Lower leg skin (tissue), 4 donors: ENCODE measurements at regions of chr17 and their contacts with region 1.

Region 1: DNA sequence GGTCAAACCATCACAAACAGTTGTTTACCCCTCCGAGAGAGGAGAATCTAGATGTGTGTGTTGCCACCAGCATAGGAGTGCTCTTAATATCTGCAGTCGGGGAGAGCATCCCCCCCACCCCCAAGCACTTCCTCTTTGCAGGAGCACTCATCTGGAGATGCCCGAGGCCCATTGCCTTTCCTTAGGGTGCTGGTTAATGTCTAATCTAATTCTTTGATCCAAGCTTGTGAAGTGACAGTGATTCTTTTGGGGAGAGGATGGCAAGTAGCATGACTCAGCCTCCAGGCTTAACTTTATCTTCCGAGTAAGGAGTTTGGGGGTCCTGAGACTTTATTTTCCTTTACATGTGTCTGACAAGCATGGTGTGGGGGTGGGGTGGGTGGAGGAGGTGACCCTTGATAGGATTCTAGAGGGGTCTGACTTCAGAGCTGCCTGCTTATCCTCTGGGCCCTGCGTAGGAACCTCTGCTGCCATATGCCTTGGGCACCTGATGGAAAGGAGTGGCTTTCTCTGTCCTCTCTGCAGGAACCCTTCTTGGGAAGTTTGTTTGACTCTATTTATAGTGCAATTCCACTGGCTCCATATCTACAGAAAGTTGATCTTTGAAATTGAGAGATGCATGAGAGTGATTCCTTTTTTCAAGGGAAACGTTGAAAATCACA is 207.1 kb downstream of the SPECC1 start:
- DNase-seq: no peak
- H3K4me3 ChIP-seq: no peak overlapping the region
- CTCF ChIP-seq: no peak
- POLR2A ChIP-seq: no peak

Region 2: DNA sequence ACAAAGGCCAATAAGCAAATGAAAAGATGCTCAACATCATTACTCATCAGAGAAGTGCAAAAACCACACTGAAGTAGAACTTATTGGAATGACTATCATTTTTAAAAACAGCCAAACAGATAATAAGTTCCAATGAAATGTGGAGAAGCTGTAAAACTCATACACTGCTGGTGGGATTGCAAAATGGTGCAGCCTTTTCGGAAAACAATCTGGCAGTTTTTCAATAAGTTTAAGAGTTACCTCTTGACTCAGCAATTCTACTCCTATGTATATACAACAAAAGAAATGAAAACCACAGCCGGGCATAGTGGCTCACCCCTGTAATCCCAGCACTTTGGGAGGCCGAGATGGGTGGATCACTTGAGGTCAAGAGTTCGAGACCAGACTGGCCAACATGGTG is 288.0 kb before region 1 on chr17:
- intact Hi-C with region 1: no loop called
- DNase-seq: no peak
- H3K4me3 ChIP-seq: no peak overlapping the region
- CTCF ChIP-seq: no peak
- POLR2A ChIP-seq: no peak

Region 3: DNA sequence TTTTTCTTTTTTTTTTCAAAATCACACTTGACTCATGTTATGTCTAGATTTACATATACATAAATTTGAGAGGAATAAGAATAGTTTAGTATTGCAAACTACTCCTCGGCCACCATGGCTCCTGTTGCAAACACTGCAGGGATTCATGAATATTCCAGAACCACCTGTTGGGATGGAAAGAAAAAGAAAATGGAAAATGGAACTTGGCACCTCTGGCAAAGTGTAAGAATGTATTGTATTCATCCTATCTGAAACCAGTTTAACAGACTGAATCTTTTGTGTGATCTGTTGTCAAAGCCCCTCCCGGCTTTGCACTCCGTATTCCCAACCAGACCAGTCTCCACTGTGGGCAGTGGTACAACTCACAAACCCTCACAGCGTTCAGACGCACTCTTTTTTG is 82.8 kb before region 1 on chr17:
- intact Hi-C with region 1: loop called (anchors 10 kb)
- DNase-seq: no peak
- H3K4me3 ChIP-seq: no peak overlapping the region
- CTCF ChIP-seq: no peak
- POLR2A ChIP-seq: no peak

Region 4: GRCh38 chr17:20266806-20267458 is 50.6 kb after region 1 on chr17:
- intact Hi-C with region 1: no loop called
- DNase-seq: no peak
- H3K4me3 ChIP-seq: no peak overlapping the region
- CTCF ChIP-seq: no peak
- POLR2A ChIP-seq: no peak